ENCODE measurements at regions of chr1 and their contacts with region 1.

Region 1: DNA sequence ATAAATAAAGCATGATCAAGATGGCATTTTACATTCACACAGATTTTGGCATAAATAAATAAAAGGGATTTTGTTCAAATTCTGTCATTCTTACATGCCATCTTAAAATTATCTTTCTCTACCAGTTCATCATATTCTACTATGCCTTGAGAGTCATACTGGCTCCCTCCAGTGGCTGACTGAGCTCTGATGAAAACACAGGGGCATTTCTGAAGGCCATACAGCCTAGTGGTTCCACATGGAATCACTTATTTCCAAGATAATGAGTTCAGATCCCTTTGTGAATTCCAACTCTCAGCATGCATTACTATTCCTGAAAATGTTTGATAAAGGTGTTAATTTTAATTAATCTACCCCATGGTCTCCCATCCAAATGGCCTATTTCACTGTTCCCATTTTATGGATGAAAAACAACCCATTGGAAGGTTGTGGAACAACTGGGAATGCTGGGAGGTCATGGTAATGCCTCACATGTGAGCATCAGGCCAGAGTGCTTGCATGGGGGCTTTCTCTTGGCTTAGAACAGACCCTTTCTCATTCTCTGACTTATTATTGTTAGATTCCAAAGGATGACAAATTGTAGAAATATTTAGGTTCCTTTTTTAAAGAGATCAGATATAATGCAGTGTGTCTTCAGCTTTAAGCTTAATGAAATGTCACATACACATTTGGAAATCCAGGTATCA is 622.4 kb upstream of the PKN2 start:
- DNase-seq: peak; percentile 61
- ATAC-seq: peak; percentile 99
- H3K4me3 Mint-ChIP-seq: no peak overlapping the region
- H3K27ac Mint-ChIP-seq: no peak overlapping the region
- H3K4me1 Mint-ChIP-seq: peaks cover 9% of the 10 kb centered on the region
- H3K27me3 Mint-ChIP-seq: no peaks in the 10 kb centered on the region
- CTCF ChIP-seq: peak; percentile 26; the same call in 1 of the 2 replicates

Region 2: GRCh38 chr1:88029142-88029541 is 32.5 kb before region 1 on chr1:
- CTCF ChIA-PET with region 1: interaction called, 17 read pairs
- POLR2A ChIA-PET with region 1: no interaction called
- DNase-seq: no peak
- ATAC-seq: peak; percentile 82
- H3K4me3 Mint-ChIP-seq: no peak overlapping the region
- H3K27ac Mint-ChIP-seq: no peak overlapping the region
- H3K4me1 Mint-ChIP-seq: peaks cover 22% of the 10 kb centered on the region
- H3K27me3 Mint-ChIP-seq: no peaks in the 10 kb centered on the region
- CTCF ChIP-seq: no peak

Region 3: DNA sequence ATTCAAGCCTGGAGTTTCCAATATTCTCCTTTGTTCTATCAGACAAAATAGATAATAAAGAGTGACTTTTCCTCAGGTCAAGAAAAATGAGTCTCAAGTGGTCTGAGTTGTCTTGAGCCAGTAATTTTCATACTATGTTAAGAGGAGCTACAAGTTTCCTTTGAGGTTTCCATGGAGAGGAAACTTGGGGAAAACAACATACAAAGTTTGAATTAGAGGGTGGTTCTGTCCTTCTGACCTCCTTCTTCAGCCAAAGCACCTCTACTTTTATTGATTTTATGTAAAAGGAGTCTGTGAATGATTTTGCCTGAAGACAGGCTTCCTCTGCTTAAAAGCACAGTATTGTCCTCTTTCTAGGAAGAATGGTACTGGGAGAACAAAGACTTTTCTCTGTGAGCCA is 125.3 kb after region 1 on chr1:
- CTCF ChIA-PET with region 1: no interaction called
- POLR2A ChIA-PET with region 1: no interaction called
- DNase-seq: no peak
- ATAC-seq: no peak
- H3K4me3 Mint-ChIP-seq: no peak overlapping the region
- H3K27ac Mint-ChIP-seq: no peak overlapping the region
- H3K4me1 Mint-ChIP-seq: 0 out of 2 replicates have a peak, but pooled peaks cover 3% of the 10 kb centered on the region
- H3K27me3 Mint-ChIP-seq: no peaks in the 10 kb centered on the region
- CTCF ChIP-seq: no peak

Measured in WTC11 (cell line).